ENCODE measurements at regions of chr4 and their contacts with region 1.

Region 1: GRCh38 chr4:1870578-1871443 is at the start of gene NSD2:
- DNase-seq: peak; percentile 90
- ATAC-seq: peak; percentile 66
- H3K4me3 Mint-ChIP-seq: peak within 1 kb of the TSS; percentile 86
- H3K27ac Mint-ChIP-seq: peak within 1 kb of the TSS; percentile 91
- H3K4me1 Mint-ChIP-seq: peaks cover 27% of the 10 kb centered on the region
- H3K27me3 Mint-ChIP-seq: no peaks in the 10 kb centered on the region
- CTCF ChIP-seq: no peak
- total RNA-seq, gene NSD2: 40.3 and 44.6 TPM in 2 replicates

Region 2: GRCh38 chr4:732911-733630 is 1137.7 kb before region 1 on chr4:
- CTCF ChIA-PET with region 1: no interaction called
- POLR2A ChIA-PET with region 1: no interaction called
- intact Hi-C with region 1: no loop called
- DNase-seq: no peak
- ATAC-seq: no peak
- H3K4me3 Mint-ChIP-seq: no peak overlapping the region
- H3K27ac Mint-ChIP-seq: no peak overlapping the region
- H3K4me1 Mint-ChIP-seq: peaks cover 1% of the 10 kb centered on the region
- H3K27me3 Mint-ChIP-seq: no peaks in the 10 kb centered on the region
- CTCF ChIP-seq: no peak

Region 3: GRCh38 chr4:1685235-1686150 is 185.3 kb before region 1 on chr4:
- CTCF ChIA-PET with region 1: no interaction called
- POLR2A ChIA-PET with region 1: no interaction called
- intact Hi-C with region 1: no loop called
- DNase-seq: no peak
- ATAC-seq: no peak
- H3K4me3 Mint-ChIP-seq: peak overlapping the region; percentile 24
- H3K27ac Mint-ChIP-seq: no peak overlapping the region
- H3K4me1 Mint-ChIP-seq: peaks cover 10% of the 10 kb centered on the region
- H3K27me3 Mint-ChIP-seq: no peaks in the 10 kb centered on the region
- CTCF ChIP-seq: no peak

Region 4: DNA sequence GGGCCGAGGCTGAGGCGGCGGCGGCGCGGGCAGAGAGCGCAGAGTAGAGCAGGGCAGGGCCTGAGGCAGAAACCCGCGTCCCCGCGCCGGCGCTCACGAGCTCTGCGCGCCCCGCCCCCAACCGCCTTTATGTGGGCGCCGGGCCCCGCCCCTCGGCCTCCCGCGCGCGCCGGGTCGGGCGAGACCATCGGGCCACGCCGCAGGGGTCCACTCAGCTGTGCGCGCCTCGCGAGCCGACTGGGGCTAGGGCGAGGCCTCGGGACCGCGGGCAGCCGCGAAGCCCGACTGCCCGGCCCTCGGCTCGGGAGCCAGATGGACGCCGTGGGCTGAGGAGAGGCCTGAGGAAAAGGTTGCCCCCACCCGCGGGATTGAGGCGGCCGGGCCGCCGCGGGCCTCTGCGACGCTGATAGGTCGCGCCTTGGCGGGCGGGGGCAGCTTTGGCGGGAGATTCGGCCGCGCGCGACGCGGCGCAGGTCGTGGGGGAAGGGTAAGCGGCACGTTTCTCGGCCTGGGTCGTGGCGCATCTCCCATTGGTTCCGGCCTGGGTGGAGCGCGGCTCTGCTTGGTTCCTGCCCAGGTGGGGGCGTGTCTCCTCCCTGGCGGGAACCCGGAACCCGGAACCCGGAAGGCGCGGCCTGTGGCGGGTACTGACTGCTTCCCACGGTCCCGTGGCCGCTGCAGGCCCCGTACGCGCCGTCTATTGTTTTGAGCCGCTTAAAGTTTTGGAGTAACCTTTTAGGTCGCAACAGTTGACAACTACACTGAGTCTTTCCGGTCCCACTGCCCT is 158.4 kb before region 1 on chr4 and contains the start of gene SLBP:
- CTCF ChIA-PET with region 1: no interaction called
- POLR2A ChIA-PET with region 1: interaction called, 9 read pairs
- intact Hi-C with region 1: loop called (anchors 1 kb)
- DNase-seq: peak; percentile 97
- ATAC-seq: peak; percentile 87
- H3K4me3 Mint-ChIP-seq: peak within 1 kb of the TSS; percentile 94
- H3K27ac Mint-ChIP-seq: peak within 1 kb of the TSS; percentile 93
- H3K4me1 Mint-ChIP-seq: peaks cover 73% of the 10 kb centered on the region
- H3K27me3 Mint-ChIP-seq: no peaks in the 10 kb centered on the region
- CTCF ChIP-seq: no peak
- total RNA-seq, gene SLBP: 34.0 and 37.8 TPM in 2 replicates

Region 5: DNA sequence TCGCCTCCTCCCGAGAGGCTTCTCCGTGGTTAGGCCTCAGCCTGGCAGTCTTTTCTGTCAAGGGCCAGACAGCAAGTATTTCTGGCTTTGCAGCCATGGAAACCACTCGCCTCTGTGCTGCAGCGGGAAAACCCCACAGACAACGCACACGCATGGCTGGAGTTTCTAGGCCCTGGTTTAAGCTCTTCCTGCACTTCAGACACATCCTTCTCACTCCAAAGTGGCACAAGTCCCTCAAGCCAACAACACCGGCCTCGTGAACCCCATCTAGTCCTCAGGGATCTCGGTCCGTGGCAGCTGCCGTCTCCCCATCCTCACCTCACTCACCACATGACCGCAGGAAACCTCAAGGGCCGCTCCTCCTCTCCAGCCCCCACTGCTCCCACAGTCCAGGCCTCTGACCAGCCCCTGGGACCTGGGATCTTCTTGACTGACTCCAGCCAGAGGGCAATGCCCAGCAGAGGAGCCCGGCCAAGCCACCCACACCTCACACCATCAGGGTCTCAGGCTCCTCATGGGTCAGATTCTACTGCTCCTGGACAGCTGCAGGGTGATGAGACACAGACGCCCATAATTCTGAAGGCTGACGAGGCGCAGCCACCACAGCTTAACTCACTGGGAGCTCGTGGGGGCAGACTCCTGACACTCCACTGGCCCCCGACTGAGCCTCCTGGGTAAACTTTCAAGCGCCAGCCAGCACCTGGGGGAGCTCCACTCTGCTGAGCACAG is 36.6 kb before region 1 on chr4:
- CTCF ChIA-PET with region 1: no interaction called
- POLR2A ChIA-PET with region 1: interaction called, 6 read pairs
- intact Hi-C with region 1: loop called (anchors 1 kb)
- DNase-seq: peak; percentile 54
- ATAC-seq: peak; percentile 90
- H3K4me3 Mint-ChIP-seq: peak overlapping the region; percentile 63
- H3K27ac Mint-ChIP-seq: peak overlapping the region; percentile 92
- H3K4me1 Mint-ChIP-seq: peaks cover 34% of the 10 kb centered on the region
- H3K27me3 Mint-ChIP-seq: no peaks in the 10 kb centered on the region
- CTCF ChIP-seq: no peak

Region 6: GRCh38 chr4:1899149-1900086 is 28.6 kb after region 1 on chr4:
- CTCF ChIA-PET with region 1: interaction called, 5 read pairs
- POLR2A ChIA-PET with region 1: no interaction called
- intact Hi-C with region 1: loop called (anchors 1 kb)
- DNase-seq: peak; percentile 44
- ATAC-seq: peak; percentile 95
- H3K4me3 Mint-ChIP-seq: no peak overlapping the region
- H3K27ac Mint-ChIP-seq: no peak overlapping the region
- H3K4me1 Mint-ChIP-seq: peaks cover 6% of the 10 kb centered on the region
- H3K27me3 Mint-ChIP-seq: no peaks in the 10 kb centered on the region
- CTCF ChIP-seq: peak; percentile 67